MCF 10A (cell line): ENCODE measurements at regions of chr4 and their contacts with region 1.

Region 1: DNA sequence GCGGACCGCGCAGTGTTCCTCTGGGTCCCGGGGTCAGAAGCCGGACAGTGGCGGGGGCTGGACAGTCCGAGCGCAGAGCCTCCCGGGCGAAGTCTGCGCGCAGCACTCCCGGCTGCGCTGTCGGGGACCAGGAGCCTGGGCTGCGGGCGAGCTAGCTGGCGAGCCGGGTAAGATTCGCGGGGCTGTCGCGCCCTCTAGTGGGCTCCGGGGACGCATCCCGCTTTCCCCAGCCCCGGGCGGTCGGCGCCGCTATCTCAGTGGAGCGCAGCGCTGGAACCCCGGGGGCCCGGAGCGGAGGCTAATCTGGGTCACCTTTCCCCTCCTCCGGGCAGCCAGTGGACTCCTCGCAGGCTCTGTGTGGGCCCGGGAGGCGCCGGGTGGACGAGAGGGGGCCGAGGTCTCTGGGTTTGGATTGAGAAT is 4.2 kb downstream of the PDGFRA start:
- DNase-seq: peak; percentile 83
- H3K4me3 Mint-ChIP-seq: peak overlapping the region; percentile 70
- H3K27ac Mint-ChIP-seq: no peak overlapping the region
- H3K4me1 Mint-ChIP-seq: peaks cover 11% of the 10 kb centered on the region
- H3K27me3 Mint-ChIP-seq: peaks cover 26% of the 10 kb centered on the region
- CTCF ChIP-seq: peak; percentile 74

Region 2: GRCh38 chr4:52376132-52376704 is 1857.1 kb before region 1 on chr4:
- CTCF ChIA-PET with region 1: interaction called, 9 read pairs
- POLR2A ChIA-PET with region 1: no interaction called
- intact Hi-C with region 1: loop called (anchors 1 kb)
- DNase-seq: peak; percentile 70
- H3K4me3 Mint-ChIP-seq: no peak overlapping the region
- H3K27ac Mint-ChIP-seq: no peak overlapping the region
- H3K4me1 Mint-ChIP-seq: peaks cover 5% of the 10 kb centered on the region
- H3K27me3 Mint-ChIP-seq: peaks cover 33% of the 10 kb centered on the region
- CTCF ChIP-seq: peak; percentile 57

Region 3: DNA sequence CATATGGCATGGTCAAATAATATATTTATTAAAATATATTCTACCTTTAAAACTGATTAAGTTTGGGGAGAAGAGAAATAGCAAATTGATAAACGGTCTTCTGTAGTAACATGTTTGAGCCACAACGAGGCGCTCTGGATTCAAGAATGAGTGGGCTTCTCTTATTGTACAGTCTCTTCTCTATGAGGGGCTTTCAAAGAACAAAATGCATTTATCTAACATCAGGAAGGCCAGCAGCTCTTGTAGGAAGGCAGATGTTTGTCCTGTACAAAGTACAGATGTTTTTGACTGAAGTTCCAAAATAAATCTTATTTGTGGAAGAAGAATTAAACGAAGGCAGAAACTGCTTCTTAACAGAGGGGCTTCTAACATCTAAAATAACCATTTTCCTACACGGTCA is 1217.6 kb before region 1 on chr4:
- CTCF ChIA-PET with region 1: interaction called, 16 read pairs
- POLR2A ChIA-PET with region 1: no interaction called
- intact Hi-C with region 1: loop called (anchors 2 kb)
- DNase-seq: peak; percentile 34
- H3K4me3 Mint-ChIP-seq: no peak overlapping the region
- H3K27ac Mint-ChIP-seq: no peak overlapping the region
- H3K4me1 Mint-ChIP-seq: peaks cover 36% of the 10 kb centered on the region
- H3K27me3 Mint-ChIP-seq: no peaks in the 10 kb centered on the region
- CTCF ChIP-seq: peak; percentile 44

Region 4: DNA sequence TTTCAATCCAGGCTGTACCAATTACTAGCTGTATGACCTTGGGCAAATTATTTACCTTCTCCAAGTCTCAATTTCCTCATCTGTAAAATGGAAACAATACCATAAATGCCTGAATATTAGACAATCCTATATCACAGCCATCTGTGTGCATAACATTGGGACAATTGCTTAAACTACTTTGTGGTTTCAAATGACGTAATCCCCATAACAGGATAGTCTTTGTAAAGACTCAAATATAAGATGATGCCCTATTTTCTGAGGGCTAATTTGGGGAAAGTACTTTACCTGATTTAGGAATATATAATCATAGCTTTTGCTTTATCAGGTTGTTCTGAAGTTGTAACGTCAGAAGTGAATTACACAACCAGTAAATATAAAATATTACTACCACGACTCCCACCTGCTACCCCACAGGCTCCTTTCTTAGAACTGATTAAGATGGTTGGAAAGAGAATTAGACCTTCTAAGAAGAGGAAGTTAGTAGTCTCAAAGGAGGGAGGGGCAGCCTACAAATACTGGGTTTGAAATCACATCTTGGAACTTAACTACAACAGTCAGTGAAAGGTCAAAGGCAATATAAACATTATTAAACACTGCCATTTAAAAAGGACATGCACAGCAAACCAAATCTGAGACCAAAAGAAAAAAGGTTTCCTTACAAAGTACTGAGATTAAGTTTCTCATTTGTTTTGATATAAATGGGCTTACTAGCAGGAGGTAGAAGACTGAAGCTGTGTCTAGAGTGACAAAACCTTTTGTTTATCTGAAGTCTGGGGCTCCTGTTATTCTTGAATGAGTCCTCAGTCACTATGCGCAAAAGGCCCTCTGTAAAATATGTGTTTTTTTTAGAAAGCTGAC is 1082.4 kb before region 1 on chr4:
- CTCF ChIA-PET with region 1: no interaction called
- POLR2A ChIA-PET with region 1: no interaction called
- intact Hi-C with region 1: no loop called
- DNase-seq: no peak
- H3K4me3 Mint-ChIP-seq: no peak overlapping the region
- H3K27ac Mint-ChIP-seq: no peak overlapping the region
- H3K4me1 Mint-ChIP-seq: no peaks in the 10 kb centered on the region
- H3K27me3 Mint-ChIP-seq: no peaks in the 10 kb centered on the region
- CTCF ChIP-seq: no peak

Region 5: DNA sequence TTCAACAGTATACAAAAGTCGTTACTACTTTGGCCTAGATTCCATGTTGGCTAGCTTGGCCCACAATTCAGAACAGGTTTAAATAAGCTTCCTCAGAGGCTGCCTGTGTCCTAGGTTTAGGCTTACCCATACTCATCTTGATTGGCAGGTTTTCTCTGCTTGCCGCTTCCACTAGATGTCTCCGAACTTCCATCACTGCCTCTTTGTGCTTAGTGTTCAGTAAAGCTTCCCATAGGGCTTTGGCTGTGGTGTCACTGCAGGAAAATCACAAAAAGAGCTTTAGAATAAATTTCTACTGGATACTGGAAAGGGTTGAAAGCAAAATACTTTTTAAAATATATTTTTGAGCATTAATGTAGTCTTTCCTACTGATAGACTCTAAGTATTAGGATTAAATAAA is 919.8 kb before region 1 on chr4:
- CTCF ChIA-PET with region 1: no interaction called
- POLR2A ChIA-PET with region 1: no interaction called
- intact Hi-C with region 1: loop called (anchors 5 kb)
- DNase-seq: peak; percentile 43
- H3K4me3 Mint-ChIP-seq: no peak overlapping the region
- H3K27ac Mint-ChIP-seq: no peak overlapping the region
- H3K4me1 Mint-ChIP-seq: peaks cover under 1% of the 10 kb centered on the region
- H3K27me3 Mint-ChIP-seq: no peaks in the 10 kb centered on the region
- CTCF ChIP-seq: no peak

Region 6: DNA sequence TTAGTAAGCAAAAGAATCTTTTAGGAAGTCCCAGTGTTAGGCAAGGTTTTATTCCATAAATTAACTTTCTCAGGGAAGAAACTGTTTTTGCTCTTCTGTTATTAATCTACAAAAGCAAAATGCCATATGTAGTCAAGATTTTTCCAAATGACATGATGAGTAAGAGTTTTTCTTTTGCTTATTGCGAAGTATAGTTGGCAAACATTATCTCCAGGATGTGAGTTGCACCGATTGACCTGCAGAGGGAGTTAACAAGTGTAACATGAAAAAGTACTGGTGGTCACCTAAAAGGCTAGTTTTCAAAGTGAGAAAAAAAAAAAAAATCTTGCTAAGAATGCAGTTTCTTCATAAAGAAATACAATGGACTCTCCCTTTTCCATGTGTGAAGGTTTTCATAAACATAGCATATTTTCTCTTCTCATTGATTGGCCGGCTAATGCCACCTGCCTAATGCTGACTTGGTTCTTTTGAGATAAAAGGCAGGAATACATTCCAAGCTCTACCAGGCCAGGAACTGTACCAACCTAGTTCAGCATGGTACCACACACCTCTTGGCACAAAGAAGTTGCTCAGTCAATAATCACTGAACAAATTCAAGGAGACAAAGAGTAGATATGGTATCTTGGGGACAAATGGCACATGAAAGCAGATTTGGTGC is 742.2 kb before region 1 on chr4:
- CTCF ChIA-PET with region 1: interaction called, 19 read pairs
- POLR2A ChIA-PET with region 1: no interaction called
- intact Hi-C with region 1: loop called (anchors 5 kb)
- DNase-seq: peak; percentile 85
- H3K4me3 Mint-ChIP-seq: no peak overlapping the region
- H3K27ac Mint-ChIP-seq: peak overlapping the region; percentile 83
- H3K4me1 Mint-ChIP-seq: no peaks in the 10 kb centered on the region
- H3K27me3 Mint-ChIP-seq: no peaks in the 10 kb centered on the region
- CTCF ChIP-seq: peak; percentile 39

Region 7: GRCh38 chr4:53914313-53915016 is 318.8 kb before region 1 on chr4:
- CTCF ChIA-PET with region 1: interaction called, 101 read pairs
- POLR2A ChIA-PET with region 1: no interaction called
- intact Hi-C with region 1: no loop called
- DNase-seq: peak; percentile 81
- H3K4me3 Mint-ChIP-seq: no peak overlapping the region
- H3K27ac Mint-ChIP-seq: peak overlapping the region; percentile 64
- H3K4me1 Mint-ChIP-seq: peaks cover 53% of the 10 kb centered on the region
- H3K27me3 Mint-ChIP-seq: no peaks in the 10 kb centered on the region
- CTCF ChIP-seq: no peak

Region 8: DNA sequence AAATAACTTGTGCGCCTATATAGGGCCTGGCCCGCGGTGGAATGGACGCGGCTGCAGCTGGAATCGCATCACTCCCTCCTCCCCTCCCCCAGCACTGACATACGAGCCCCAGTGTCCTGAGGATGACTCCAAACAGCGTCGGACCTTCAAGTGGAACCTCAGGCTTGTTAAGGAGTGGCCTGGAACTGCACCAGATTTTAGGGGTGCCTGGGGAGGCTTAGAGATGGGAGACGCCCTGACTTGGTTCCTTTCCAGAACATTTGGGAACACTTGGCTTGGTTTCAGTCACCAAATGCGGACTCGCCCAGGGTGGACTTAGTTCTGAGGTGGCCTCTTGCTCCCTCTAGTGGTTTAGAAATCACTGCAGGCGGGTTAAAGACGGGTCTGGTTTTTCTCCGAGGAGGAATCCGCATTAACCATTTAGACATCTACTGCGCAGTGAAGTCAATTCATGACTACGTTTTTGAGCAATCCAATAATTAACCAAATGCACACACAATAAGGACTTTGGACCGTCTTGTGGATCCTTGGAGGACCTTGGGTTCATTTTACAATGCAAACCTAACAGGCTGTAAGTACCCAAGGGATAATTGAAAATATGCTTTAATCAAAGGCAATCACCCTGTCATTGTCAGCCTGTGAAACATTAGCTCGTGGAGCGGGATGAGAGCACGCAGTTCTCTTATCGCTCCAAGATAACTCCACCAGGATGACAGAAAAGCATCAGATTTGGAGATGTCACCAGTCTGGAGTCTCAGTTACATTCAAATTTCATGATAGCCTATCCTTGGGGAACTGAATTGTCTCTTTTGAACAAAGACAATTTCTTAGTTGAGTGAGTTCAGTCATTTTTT is 15.4 kb before region 1 on chr4:
- CTCF ChIA-PET with region 1: interaction called, 35 read pairs
- POLR2A ChIA-PET with region 1: no interaction called
- intact Hi-C with region 1: no loop called
- DNase-seq: peak; percentile 91
- H3K4me3 Mint-ChIP-seq: peak overlapping the region; percentile 40
- H3K27ac Mint-ChIP-seq: no peak overlapping the region
- H3K4me1 Mint-ChIP-seq: peaks cover 14% of the 10 kb centered on the region
- H3K27me3 Mint-ChIP-seq: no peaks in the 10 kb centered on the region
- CTCF ChIP-seq: peak; percentile 77

Region 9: GRCh38 chr4:54764476-54764875 is 531.2 kb after region 1 on chr4:
- CTCF ChIA-PET with region 1: no interaction called
- POLR2A ChIA-PET with region 1: no interaction called
- intact Hi-C with region 1: no loop called
- DNase-seq: no peak
- H3K4me3 Mint-ChIP-seq: no peak overlapping the region
- H3K27ac Mint-ChIP-seq: no peak overlapping the region
- H3K4me1 Mint-ChIP-seq: no peaks in the 10 kb centered on the region
- H3K27me3 Mint-ChIP-seq: peaks cover 24% of the 10 kb centered on the region
- CTCF ChIP-seq: no peak